ENCODE measurements at regions of chr15 and their contacts with region 1.

Region 1: GRCh38 chr15:89575146-89575655 is at the start of gene TICRR:
- DNase-seq: peak; percentile 98
- H3K4me3 ChIP-seq: peak within 1 kb of the TSS; percentile 47 to 85 (median 71)
- H3K27ac ChIP-seq: peak within 1 kb of the TSS in 1 of 4 donors; percentile 41
- H3K4me1 ChIP-seq: peaks cover 0 to 14% (median 9%) of the 10 kb centered on the region in 4 donors
- H3K27me3 ChIP-seq: no peaks in the 10 kb centered on the region
- CTCF ChIP-seq: no peak
- EP300 ChIP-seq: no peak
- POLR2A ChIP-seq: no peak
- total RNA-seq, gene TICRR: 0.14 TPM in 1 of 4 donors, not detected in the others

Region 2: GRCh38 chr15:89334510-89335288 is 240.5 kb before region 1 on chr15 and contains the start of gene POLG:
- intact Hi-C with region 1: loop called (anchors 10 kb)
- DNase-seq: peak; percentile 100
- H3K4me3 ChIP-seq: peak within 1 kb of the TSS; percentile 61 to 98 (median 85)
- H3K27ac ChIP-seq: peak within 1 kb of the TSS; percentile 86 to 94 (median 94)
- H3K4me1 ChIP-seq: peaks cover 0 to 51% (median 47%) of the 10 kb centered on the region in 4 donors
- H3K27me3 ChIP-seq: no peaks in the 10 kb centered on the region
- CTCF ChIP-seq: no peak
- EP300 ChIP-seq: no peak
- POLR2A ChIP-seq: peak; percentile 84 to 92
- total RNA-seq, gene POLG: 37.7 to 43.4 (median 39.8) TPM

Region 3: GRCh38 chr15:89485855-89486361 is 89.3 kb before region 1 on chr15:
- intact Hi-C with region 1: no loop called
- DNase-seq: no peak
- H3K4me3 ChIP-seq: no peak overlapping the region
- H3K27ac ChIP-seq: no peak overlapping the region
- H3K4me1 ChIP-seq: no peaks in the 10 kb centered on the region
- H3K27me3 ChIP-seq: peaks cover 0 to 20% (median 5%) of the 10 kb centered on the region in 3 donors
- CTCF ChIP-seq: no peak
- EP300 ChIP-seq: no peak
- POLR2A ChIP-seq: no peak

Region 4: DNA sequence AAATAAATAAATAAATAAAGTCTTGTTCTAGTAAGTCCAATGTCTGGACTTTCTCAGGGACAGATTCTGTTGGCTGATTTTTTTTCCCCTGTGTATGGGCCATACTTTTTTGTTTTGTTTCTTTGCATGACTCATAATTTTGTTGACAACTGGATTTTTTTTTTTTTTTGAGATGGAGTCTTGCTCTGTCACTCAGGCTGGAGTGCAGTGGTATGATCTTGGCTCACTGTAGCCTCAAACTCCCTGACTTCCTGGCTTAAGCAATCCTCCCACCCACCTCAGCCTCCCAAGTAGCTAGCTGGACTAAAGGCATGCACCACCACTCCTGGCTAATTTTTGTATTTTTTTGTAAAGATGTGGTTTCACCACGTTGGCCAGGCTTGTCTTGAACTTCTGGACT is 39.0 kb after region 1 on chr15:
- intact Hi-C with region 1: no loop called
- DNase-seq: no peak
- H3K4me3 ChIP-seq: no peak overlapping the region
- H3K27ac ChIP-seq: no peak overlapping the region
- H3K4me1 ChIP-seq: no peaks in the 10 kb centered on the region
- H3K27me3 ChIP-seq: peaks cover 0 to 9% (median 0%) of the 10 kb centered on the region in 3 donors
- CTCF ChIP-seq: no peak
- EP300 ChIP-seq: no peak
- POLR2A ChIP-seq: no peak